ENCODE measurements at regions of chr2 and their contacts with region 1.

Region 1: GRCh38 chr2:44361330-44362206 is at the starts of genes CAMKMT and PREPL:
- DNase-seq: peak; percentile 99
- H3K4me3 Mint-ChIP-seq: peak within 1 kb of the TSS; percentile 96
- H3K27ac Mint-ChIP-seq: peak within 1 kb of the TSS; percentile 99
- H3K4me1 Mint-ChIP-seq: peaks cover 48% of the 10 kb centered on the region
- H3K27me3 Mint-ChIP-seq: no peaks in the 10 kb centered on the region
- total RNA-seq, gene CAMKMT: 9.3 to 11.3 TPM
- total RNA-seq, gene PREPL: 25.2 to 32.1 TPM

Region 2: DNA sequence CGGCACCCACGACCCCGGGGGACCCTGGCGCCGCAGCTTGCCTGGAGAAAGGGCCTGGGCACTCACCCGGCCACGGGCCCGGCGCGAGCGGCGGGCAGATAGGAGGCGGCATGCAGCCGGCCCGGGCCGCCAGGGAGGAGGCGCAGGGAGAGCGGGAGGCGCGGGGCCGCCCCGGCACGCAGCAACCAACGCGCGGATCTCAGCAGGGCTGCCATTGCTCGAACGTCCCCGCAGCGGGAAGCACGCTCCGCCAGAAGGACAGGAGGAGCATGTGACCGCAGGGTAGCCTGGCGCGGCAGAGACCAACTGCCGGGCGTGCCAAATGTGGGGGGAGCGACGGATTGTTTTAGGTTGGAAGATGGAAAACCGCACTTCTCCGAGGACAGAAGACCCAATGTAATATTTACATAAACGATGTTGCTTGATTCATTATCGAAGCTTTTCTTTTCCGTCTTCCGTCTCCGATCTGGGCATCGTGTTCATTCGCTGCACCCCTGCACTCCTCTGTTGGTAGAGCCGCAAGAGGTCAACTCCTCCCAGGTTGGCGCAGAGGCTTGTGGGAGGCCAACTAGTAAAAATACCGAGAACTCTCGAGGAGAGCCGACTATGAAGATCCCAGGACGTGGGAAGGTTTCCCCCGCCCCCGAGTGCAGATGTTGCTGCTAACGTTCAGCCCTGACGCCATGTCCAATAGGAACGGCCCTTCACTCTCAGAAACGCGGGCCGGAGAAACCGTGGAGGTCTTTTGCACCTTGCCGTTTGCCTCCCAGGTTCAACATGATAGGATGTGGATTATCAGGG is 365.6 kb before region 1 on chr2 and contains the start of gene LRPPRC:
- CTCF ChIA-PET with region 1: no interaction called
- POLR2A ChIA-PET with region 1: interaction called, 6 read pairs
- intact Hi-C with region 1: loop called (anchors 1 kb)
- DNase-seq: peak; percentile 94
- H3K4me3 Mint-ChIP-seq: peak within 1 kb of the TSS; percentile 90
- H3K27ac Mint-ChIP-seq: peak within 1 kb of the TSS; percentile 95
- H3K4me1 Mint-ChIP-seq: peaks cover 40% of the 10 kb centered on the region
- H3K27me3 Mint-ChIP-seq: no peaks in the 10 kb centered on the region
- total RNA-seq, gene LRPPRC: 141 to 144 TPM

Region 3: GRCh38 chr2:44120428-44120827 is 241.1 kb before region 1 on chr2:
- CTCF ChIA-PET with region 1: no interaction called
- POLR2A ChIA-PET with region 1: no interaction called
- intact Hi-C with region 1: loop called (anchors 2 kb)
- DNase-seq: peak; percentile 63
- H3K4me3 Mint-ChIP-seq: peak overlapping the region; percentile 28
- H3K27ac Mint-ChIP-seq: peak overlapping the region; percentile 39
- H3K4me1 Mint-ChIP-seq: peaks cover 34% of the 10 kb centered on the region
- H3K27me3 Mint-ChIP-seq: peaks cover 5% of the 10 kb centered on the region

Region 4: GRCh38 chr2:44237221-44237620 is 124.3 kb before region 1 on chr2:
- CTCF ChIA-PET with region 1: no interaction called
- POLR2A ChIA-PET with region 1: no interaction called
- intact Hi-C with region 1: no loop called
- DNase-seq: peak; percentile 34
- H3K4me3 Mint-ChIP-seq: no peak overlapping the region
- H3K27ac Mint-ChIP-seq: peak overlapping the region; percentile 36
- H3K4me1 Mint-ChIP-seq: peaks cover 26% of the 10 kb centered on the region
- H3K27me3 Mint-ChIP-seq: no peaks in the 10 kb centered on the region

Region 5: GRCh38 chr2:44817673-44818335 is 456.2 kb after region 1 on chr2:
- CTCF ChIA-PET with region 1: no interaction called
- POLR2A ChIA-PET with region 1: no interaction called
- intact Hi-C with region 1: no loop called
- DNase-seq: no peak
- H3K4me3 Mint-ChIP-seq: no peak overlapping the region
- H3K27ac Mint-ChIP-seq: no peak overlapping the region
- H3K4me1 Mint-ChIP-seq: no peaks in the 10 kb centered on the region
- H3K27me3 Mint-ChIP-seq: peaks cover 22% of the 10 kb centered on the region